ENCODE measurements at regions of chr20 and their contacts with region 1.

Region 1: DNA sequence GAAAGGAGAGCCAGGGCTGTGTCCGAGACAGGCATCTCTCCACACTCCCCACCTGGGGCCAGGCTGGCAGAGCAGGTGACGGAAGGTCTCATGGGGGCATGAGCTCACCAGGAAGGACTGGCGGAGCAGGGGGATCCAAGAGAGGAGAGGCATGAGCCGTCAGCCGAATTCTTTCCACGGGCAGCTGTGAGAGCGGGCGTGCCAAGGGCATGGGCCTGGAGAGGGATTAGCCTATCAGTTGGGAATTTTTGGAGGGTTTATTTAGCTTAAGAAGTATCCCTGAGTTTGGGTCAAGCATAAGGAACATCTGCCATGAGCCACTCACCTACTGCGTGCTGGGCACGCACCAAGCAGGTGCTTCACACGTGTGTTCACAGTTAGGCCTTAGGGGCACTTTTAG is 60.2 kb upstream of the ZNFX1 start:
- DNase-seq: no peak
- ATAC-seq: no peak
- H3K4me3 ChIP-seq: no peak overlapping the region
- H3K27ac ChIP-seq: no peak overlapping the region
- H3K4me1 ChIP-seq: peaks cover 2% of the 10 kb centered on the region; the same call in 1 of the 2 replicates
- H3K27me3 ChIP-seq: peaks cover 16% of the 10 kb centered on the region
- CTCF ChIP-seq: no peak
- POLR2A ChIP-seq: no peak
- RAD21 ChIP-seq: no peak

Region 2: GRCh38 chr20:49352751-49353150 is 14.7 kb after region 1 on chr20:
- CTCF ChIA-PET with region 1: no interaction called
- POLR2A ChIA-PET with region 1: no interaction called
- dilution Hi-C with region 1: no loop called
- in situ Hi-C with region 1: no loop called
- intact Hi-C with region 1: no loop called
- DNase-seq: no peak
- ATAC-seq: no peak
- H3K4me3 ChIP-seq: no peak overlapping the region
- H3K27ac ChIP-seq: no peak overlapping the region
- H3K4me1 ChIP-seq: no peaks in the 10 kb centered on the region
- H3K27me3 ChIP-seq: peaks cover 46% of the 10 kb centered on the region
- CTCF ChIP-seq: no peak
- POLR2A ChIP-seq: no peak
- RAD21 ChIP-seq: no peak

Region 3: GRCh38 chr20:49534255-49534712 is 196.2 kb after region 1 on chr20:
- CTCF ChIA-PET with region 1: interaction called, 3 read pairs
- POLR2A ChIA-PET with region 1: no interaction called
- dilution Hi-C with region 1: no loop called
- in situ Hi-C with region 1: no loop called
- intact Hi-C with region 1: loop called (anchors 1 kb)
- DNase-seq: peak; percentile 44
- ATAC-seq: peak; percentile 97
- H3K4me3 ChIP-seq: no peak overlapping the region
- H3K27ac ChIP-seq: no peak overlapping the region
- H3K4me1 ChIP-seq: no peaks in the 10 kb centered on the region
- H3K27me3 ChIP-seq: no peaks in the 10 kb centered on the region; the same call in 1 of the 2 replicates
- CTCF ChIP-seq: peak; percentile 77
- POLR2A ChIP-seq: no peak
- RAD21 ChIP-seq: peak; percentile 75

Region 4: GRCh38 chr20:49562311-49563014 is 224.4 kb after region 1 on chr20:
- CTCF ChIA-PET with region 1: no interaction called
- POLR2A ChIA-PET with region 1: no interaction called
- dilution Hi-C with region 1: no loop called
- in situ Hi-C with region 1: no loop called
- intact Hi-C with region 1: no loop called
- DNase-seq: peak; percentile 84
- ATAC-seq: peak; percentile 94
- H3K4me3 ChIP-seq: no peak overlapping the region
- H3K27ac ChIP-seq: peak overlapping the region; percentile 31; the same call in 1 of the 2 replicates
- H3K4me1 ChIP-seq: peaks cover 16% of the 10 kb centered on the region
- H3K27me3 ChIP-seq: peaks cover 1% of the 10 kb centered on the region; the same call in 1 of the 2 replicates
- CTCF ChIP-seq: no peak
- POLR2A ChIP-seq: no peak
- RAD21 ChIP-seq: no peak